AG04449 (cell line): ENCODE measurements at regions of chr10 and their contacts with region 1.

Region 1: DNA sequence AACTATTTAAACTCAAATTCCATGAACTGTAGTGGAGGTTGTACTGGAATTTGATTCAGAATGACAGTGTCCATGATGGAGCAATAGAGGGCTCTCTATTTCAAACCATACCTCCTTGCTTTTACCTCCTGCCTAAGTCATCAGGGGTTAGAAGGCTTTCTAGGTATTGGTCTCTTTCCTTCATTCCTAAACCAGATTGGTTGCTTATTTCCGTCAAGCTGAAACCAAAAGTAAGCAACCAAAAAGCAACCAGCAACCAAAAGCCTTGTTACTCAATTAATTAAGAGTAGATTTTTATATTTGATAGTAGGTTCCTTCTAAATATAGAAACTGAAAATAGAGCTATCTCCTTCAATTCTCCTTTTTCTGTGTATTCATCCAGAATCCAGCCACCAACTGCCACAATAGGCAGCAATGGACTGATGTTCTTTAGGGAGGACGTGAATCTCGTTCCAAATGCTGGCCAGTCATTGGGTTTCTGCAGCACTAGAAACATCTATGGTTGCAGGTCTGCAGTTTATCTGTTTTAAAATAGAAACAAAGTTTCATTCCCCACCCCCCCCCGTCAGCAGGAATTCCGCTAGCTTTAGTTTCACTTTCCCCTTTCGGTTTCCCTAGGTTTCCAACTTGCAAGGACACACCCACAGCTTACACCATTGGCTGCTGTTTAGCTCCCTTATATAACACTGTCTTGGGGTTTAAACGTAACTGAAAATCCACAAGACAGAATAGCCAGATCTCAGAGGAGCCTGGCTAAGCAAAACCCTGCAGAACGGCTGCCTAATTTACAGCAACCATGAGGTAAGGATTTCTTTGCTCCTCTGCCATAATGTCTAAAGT is at the start of gene IFIT1:
- DNase-seq: peak; percentile 85
- H3K4me3 ChIP-seq: peak within 1 kb of the TSS; percentile 75
- CTCF ChIP-seq: no peak

Region 2: DNA sequence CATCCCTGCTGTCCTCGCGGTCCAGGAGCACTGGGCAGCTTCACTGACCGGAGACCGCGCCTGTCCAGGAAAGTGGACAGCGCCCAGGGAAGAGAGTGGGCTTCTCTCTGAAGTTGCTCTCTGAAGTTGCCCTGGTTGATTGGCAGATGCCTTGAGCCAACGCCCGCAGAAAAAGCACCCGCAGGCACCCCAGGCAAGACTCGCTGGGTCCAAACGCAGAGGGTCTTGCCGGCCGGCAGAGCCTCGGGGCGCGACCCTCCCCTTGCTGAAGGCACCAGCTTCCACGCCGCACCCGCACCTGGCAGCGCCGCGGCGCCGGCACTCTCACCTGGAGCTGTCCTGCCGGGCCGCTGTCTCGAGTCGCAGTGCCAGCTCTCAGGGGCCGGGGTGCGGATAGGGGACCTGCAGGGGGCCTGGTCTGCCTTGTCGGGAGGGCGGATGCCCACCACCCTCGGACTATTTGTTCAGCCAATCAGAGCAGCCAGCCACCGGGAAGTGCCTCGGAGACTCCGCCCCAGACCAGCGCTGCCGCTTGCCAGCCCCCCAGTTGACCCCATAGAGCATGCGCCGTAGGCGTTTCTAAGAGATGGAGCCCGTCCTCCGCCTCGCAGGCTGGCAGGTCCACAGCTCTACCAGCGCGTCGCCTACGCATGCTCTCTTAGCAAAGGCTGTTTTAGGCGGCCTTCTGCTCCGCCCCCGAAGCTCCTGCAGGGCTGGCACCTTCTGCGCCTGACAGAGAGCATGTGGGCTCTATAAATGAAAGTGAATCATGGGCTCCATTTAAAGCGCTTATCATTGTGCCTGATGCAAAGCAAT is 140.5 kb before region 1 on chr10 and contains the start of gene LIPA:
- CTCF ChIA-PET with region 1: interaction called, 10 read pairs
- POLR2A ChIA-PET with region 1: interaction called, 3 read pairs
- DNase-seq: peak; percentile 81
- H3K4me3 ChIP-seq: peak within 1 kb of the TSS; percentile 83
- CTCF ChIP-seq: no peak

Region 3: DNA sequence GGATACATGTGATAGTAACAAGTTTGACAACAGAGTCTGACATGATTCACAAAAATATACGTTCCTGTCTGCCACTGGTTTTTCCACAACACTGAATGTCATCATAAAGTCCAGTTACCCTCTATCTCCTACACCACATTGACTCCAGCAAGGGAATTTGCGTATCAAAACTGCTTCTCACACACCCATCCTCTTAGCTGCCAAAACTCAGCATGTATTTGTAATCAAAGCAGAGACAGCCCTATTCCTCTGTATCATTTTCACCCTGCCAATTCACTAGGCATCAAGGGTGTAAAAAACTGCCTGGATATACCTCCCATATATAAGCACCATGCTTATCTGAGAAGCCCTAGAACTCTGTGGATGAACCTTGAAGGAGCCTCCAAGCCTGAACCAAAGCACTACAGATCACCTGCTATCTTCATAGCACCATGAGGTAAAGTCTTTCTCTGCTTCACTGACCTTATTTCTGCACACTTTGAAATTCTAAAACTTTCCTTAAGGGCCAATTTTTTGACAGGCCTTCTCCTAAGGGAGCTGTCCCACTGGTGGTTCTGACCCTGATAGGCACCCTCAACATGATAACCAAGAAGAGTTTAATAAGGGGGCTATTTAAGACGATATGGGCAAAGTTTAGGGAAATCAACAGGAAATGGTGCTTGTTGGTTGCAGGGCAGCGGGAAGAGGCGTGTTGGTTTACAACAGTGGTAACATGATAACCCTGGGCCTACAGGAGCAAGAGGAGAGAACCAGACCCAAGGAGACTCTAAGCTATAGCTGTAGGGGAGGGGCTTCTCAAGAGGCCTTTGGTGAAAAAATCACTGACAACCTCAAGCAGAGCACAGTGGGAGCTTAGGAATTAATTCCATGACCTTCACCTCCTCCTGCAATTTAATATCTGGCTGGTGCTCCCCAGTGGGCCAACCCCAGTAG is 14.2 kb before region 1 on chr10 and contains the start of gene IFIT1B:
- CTCF ChIA-PET with region 1: interaction called, 63 read pairs
- POLR2A ChIA-PET with region 1: no interaction called
- DNase-seq: no peak
- H3K4me3 ChIP-seq: no peak within 1 kb of the TSS
- CTCF ChIP-seq: no peak

Region 4: DNA sequence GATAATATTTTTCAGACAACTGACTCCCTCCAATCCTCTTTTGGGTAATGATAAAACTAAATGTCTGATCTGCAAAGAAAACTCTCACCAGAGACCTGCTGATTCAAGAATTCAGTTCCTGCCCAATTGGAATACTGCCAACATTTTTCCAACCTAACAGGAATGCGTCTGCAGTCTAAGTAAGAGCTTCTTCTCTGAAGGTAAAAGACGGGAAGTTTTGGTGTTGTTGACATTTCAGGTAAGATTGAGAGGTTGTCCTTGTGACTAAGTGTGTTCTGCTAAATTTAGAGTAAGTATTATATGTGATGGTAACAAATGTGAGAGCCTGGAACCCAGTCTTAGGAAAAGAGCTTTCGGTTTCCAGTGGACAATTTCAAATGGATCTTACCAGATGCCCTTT is 39.8 kb after region 1 on chr10:
- CTCF ChIA-PET with region 1: no interaction called
- POLR2A ChIA-PET with region 1: no interaction called
- DNase-seq: no peak
- H3K4me3 ChIP-seq: no peak overlapping the region
- CTCF ChIP-seq: no peak